Lower leg skin (tissue), 4 donors: ENCODE measurements at regions of chr5 and their contacts with region 1.

Region 1: DNA sequence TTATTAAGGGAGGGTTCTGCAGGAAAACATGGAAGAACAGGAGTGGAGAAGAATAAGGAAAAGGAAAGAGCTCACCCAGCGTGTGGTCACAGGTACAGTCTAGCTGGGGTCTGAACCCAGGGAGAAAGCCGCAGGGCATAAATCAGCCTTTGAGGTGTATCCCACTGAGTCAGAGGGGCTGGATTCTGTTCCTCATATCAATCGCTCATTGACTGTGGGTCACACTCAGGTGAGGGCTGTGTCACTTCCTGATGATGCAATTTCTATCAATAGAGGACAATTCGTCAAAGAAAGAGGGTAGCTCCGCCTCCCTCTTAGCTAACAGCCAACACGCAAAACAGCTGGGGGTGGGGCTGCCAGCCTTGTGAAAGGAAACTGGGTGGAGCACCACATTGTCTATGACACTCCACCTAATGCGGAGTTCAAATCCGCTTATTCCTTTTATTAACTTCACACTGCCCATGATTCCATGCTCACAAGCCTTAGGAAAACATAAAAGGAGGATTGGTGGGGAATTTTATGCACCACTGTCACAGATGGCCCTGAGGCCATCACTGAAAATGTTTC is 176.2 kb downstream of the ICE1 start:
- DNase-seq: peak in 1 of 2 donors; percentile 75
- H3K4me3 ChIP-seq: no peak overlapping the region
- CTCF ChIP-seq: no peak
- POLR2A ChIP-seq: no peak

Region 2: DNA sequence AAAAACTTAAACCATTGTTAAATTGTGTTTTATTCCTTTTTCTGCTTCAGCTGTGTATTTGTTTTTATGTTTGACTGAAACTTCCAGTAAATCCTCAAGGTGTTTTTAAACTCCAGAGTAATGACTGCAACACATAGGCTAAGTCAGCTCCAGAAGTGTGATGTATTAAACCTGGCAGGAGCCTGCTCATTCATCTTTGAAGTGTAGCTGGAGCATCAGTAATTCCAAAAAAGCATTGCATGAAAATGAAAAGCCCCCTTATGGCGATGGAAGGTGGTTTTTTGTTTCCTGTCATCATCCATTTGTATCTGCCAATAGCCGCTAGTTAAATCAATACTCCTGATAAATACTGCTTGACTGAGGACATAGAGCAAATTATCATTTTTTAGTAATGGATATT is 932.7 kb before region 1 on chr5:
- intact Hi-C with region 1: loop called (anchors 5 kb)
- DNase-seq: no peak
- H3K4me3 ChIP-seq: no peak overlapping the region
- CTCF ChIP-seq: no peak
- POLR2A ChIP-seq: no peak